Astrocyte of the cerebellum (primary cell): ENCODE measurements at regions of chr19 and their contacts with region 1.

Region 1: GRCh38 chr19:34904846-34905527 is 21.7 kb upstream of the ZNF30 start:
- DNase-seq: no peak
- H3K4me3 ChIP-seq: no peak overlapping the region
- CTCF ChIP-seq: no peak

Region 2: GRCh38 chr19:34549833-34550232 is 355.2 kb before region 1 on chr19:
- in situ Hi-C with region 1: no loop called
- DNase-seq: no peak
- H3K4me3 ChIP-seq: no peak overlapping the region
- CTCF ChIP-seq: no peak

Region 3: GRCh38 chr19:34832581-34833112 is 72.3 kb before region 1 on chr19:
- in situ Hi-C with region 1: loop called (anchors 5 kb)
- DNase-seq: no peak
- H3K4me3 ChIP-seq: no peak overlapping the region
- CTCF ChIP-seq: no peak

Region 4: GRCh38 chr19:35013031-35013819 is 108.2 kb after region 1 on chr19:
- in situ Hi-C with region 1: no loop called
- DNase-seq: no peak
- H3K4me3 ChIP-seq: no peak overlapping the region
- CTCF ChIP-seq: peak; percentile 98